B cell (primary cell): ENCODE measurements at regions of chr6 and their contacts with region 1.

Region 1: GRCh38 chr6:142926494-142927270 is 18.3 kb downstream of the HIVEP2 start:
- DNase-seq: peak; percentile 88
- ATAC-seq: peak; percentile 92
- H3K4me3 ChIP-seq: peak overlapping the region; percentile 46 to 94 (median 75)
- H3K4me3 Mint-ChIP-seq: peak overlapping the region; percentile 98
- H3K27ac ChIP-seq: peak overlapping the region; percentile 98
- H3K27ac Mint-ChIP-seq: peak overlapping the region; percentile 96
- H3K4me1 ChIP-seq: peaks cover 16 to 37% of the 10 kb centered on the region in 2 donors
- H3K4me1 Mint-ChIP-seq: peaks cover 49% of the 10 kb centered on the region
- H3K27me3 ChIP-seq: no peaks in the 10 kb centered on the region
- H3K27me3 Mint-ChIP-seq: no peaks in the 10 kb centered on the region
- CTCF ChIP-seq: no peak

Region 2: DNA sequence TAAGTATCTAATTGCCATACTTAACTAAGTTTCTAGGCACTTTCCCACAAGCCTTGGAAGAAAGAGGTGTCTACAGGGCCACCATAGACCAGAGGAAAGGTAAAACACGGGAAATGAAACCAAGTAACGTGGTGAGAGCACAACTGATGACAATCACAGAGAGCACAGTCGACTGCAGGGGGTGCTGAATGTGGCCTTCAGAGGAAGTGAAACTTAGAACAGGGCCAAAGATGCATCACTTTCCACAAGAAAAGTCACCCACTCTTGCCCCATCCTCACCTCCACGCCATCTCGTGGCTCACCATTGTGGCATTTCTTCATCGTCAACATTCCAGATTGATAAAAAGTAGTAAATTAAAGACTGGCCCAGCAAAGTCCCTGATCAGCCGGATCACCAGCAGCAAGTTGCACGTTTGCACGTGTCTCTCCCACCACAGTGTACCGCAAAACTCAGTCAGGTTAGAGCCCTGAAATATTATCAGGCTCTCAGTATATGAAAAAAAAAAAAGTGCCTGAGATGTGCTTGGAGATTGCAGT is 13.1 kb before region 1 on chr6:
- CTCF ChIA-PET with region 1: interaction called, 3 read pairs
- POLR2A ChIA-PET with region 1: interaction called, 4 read pairs
- intact Hi-C with region 1: loop called (anchors 1 kb)
- DNase-seq: peak; percentile 92
- ATAC-seq: peak; percentile 95
- H3K4me3 ChIP-seq: peak overlapping the region in 4 of 5 experiments; percentile 9 to 60 (median 24)
- H3K4me3 Mint-ChIP-seq: peak overlapping the region; percentile 91
- H3K27ac ChIP-seq: peak overlapping the region; percentile 93
- H3K27ac Mint-ChIP-seq: peak overlapping the region; percentile 99
- H3K4me1 ChIP-seq: peaks cover 21 to 22% of the 10 kb centered on the region in 2 donors
- H3K4me1 Mint-ChIP-seq: peaks cover 40% of the 10 kb centered on the region
- H3K27me3 ChIP-seq: no peaks in the 10 kb centered on the region
- H3K27me3 Mint-ChIP-seq: no peaks in the 10 kb centered on the region
- CTCF ChIP-seq: peak; percentile 63

Region 3: DNA sequence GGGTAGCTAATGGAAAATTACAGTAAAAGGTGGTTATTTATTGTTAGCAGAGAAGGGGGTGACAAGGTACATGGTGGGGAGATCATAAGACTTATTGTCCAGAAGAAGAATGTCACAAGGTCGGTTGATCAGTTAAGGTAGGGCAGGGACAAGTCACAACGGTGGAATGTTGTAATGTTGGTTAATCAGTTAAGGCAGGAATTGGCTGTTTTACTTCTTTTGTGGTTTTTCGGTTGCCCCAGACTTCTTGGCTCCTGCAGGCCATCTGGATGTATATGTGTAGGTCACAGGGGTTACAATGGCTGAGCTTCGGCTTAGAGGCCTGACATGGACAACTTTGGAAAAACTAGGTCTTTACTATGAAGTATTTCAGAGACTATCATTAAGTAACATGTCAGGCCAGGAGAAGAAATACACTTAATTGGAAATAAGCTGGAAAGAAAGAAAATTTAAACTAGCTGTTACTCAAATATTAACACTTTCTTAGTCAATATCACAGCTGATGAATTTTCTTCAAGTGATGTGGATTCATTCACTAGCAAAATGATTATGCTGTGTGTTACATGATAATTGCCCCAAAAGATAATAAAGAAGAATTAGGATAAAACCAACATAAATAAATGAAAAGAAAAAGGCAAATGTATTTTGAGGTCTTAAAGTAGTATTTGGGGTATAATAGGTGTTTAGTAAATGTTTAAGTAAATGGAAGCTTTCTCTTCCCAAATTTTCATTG is 138.4 kb after region 1 on chr6:
- CTCF ChIA-PET with region 1: no interaction called
- POLR2A ChIA-PET with region 1: no interaction called
- intact Hi-C with region 1: no loop called
- DNase-seq: no peak
- ATAC-seq: no peak
- H3K4me3 ChIP-seq: no peak overlapping the region
- H3K4me3 Mint-ChIP-seq: no peak overlapping the region
- H3K27ac ChIP-seq: no peak overlapping the region
- H3K27ac Mint-ChIP-seq: no peak overlapping the region
- H3K4me1 ChIP-seq: peaks cover 8 to 9% of the 10 kb centered on the region in 2 donors
- H3K4me1 Mint-ChIP-seq: peaks cover 15% of the 10 kb centered on the region
- H3K27me3 ChIP-seq: no peaks in the 10 kb centered on the region
- H3K27me3 Mint-ChIP-seq: no peaks in the 10 kb centered on the region
- CTCF ChIP-seq: no peak